ENCODE measurements at regions of chr3 and their contacts with region 1.

Region 1: DNA sequence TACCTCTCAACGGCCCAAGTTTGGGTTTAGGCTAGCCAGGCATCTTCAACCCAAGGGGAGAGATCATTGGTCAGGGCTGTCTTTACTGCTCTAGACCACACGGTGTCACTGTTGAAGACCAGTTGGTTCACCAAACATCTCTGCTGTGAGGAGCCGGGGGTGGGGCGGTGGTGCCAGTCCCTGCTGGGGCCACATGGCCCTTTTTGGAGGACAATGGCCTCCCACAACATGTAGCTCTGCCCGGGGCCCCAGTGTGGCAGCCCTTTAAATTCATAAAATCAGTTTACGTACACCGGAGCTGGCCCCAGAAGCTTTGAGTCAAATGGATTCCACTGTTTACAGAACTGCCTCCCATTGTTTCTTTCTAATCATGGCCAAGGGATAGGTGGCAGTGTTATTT is 19.1 kb upstream of the TM4SF18 start:
- DNase-seq: peak; percentile 70
- H3K4me3 ChIP-seq: no peak overlapping the region
- H3K27ac ChIP-seq: no peak overlapping the region
- H3K4me1 ChIP-seq: peaks cover 12% of the 10 kb centered on the region
- H3K27me3 ChIP-seq: no peaks in the 10 kb centered on the region
- CTCF ChIP-seq: peak; percentile 74
- POLR2A ChIP-seq: no peak

Region 2: DNA sequence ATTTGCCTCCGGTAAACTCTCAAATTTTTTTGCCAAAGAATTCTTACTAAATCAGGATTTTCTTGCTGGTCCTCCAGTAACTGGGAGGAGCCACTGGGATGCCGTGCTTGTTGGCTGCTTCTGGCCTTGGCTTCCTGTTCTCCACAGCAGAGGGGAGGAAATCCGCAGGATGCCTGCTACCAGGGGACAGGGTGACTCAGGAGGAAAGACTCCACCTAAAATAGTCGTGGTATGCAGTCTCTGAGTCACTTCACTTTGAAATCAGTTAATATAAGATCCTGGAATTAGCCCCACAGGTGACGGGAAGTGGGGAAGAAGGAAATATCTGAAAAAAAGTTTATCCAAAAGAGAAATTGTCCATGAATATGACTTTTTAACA is 12.6 kb before region 1 on chr3:
- CTCF ChIA-PET with region 1: interaction called, 18 read pairs
- POLR2A ChIA-PET with region 1: interaction called, 3 read pairs
- dilution Hi-C with region 1: no loop called
- intact Hi-C with region 1: loop called (anchors 1 kb)
- DNase-seq: peak; percentile 99
- H3K4me3 ChIP-seq: peak overlapping the region in 1 of 3 experiments; percentile 45
- H3K27ac ChIP-seq: peak overlapping the region; percentile 99
- H3K4me1 ChIP-seq: peaks cover 54% of the 10 kb centered on the region
- H3K27me3 ChIP-seq: no peaks in the 10 kb centered on the region
- CTCF ChIP-seq: no peak
- POLR2A ChIP-seq: peak; percentile 88

Region 3: DNA sequence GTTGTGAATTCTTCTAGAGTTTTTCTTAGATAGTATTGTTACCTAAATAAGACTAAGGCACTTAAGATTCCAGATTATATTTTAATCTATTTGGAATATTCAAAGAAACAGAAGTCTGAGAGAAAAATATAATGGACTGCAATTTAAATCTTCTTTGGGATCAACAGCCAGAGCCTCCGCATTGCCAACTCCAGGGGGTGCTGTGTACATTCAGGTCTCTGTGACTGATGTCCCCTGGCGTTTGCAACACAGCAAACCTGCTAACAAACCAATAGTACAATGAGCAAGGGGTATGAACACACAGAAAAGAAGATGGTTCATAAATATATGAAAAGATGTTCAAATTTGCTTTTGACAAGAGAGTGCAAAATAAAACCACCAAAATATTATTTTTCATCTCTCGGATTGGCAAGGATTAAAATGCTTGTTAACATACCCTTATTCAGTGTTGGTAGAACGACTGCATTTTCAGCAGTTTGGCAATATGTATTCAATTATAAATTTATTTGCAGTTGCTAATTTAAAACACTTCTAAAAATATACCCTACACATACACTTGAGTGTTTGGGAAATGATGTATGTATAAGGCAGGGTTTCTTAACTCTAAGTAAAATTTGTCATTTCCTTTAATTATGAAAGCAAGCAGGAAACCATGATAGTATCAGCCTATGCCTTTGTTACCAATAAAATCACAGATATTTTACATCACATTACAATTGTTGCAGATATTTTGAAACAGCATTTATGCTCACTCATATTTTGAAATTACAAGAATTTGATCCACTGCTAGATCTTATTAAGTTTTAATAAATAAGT is 41.0 kb after region 1 on chr3:
- CTCF ChIA-PET with region 1: no interaction called
- POLR2A ChIA-PET with region 1: no interaction called
- dilution Hi-C with region 1: no loop called
- intact Hi-C with region 1: loop called (anchors 1 kb)
- DNase-seq: peak; percentile 88
- H3K4me3 ChIP-seq: peak overlapping the region in 1 of 3 experiments; percentile 21
- H3K27ac ChIP-seq: peak overlapping the region; percentile 90
- H3K4me1 ChIP-seq: peaks cover 31% of the 10 kb centered on the region
- H3K27me3 ChIP-seq: no peaks in the 10 kb centered on the region
- CTCF ChIP-seq: peak; percentile 84
- POLR2A ChIP-seq: no peak

Measured in endothelial cell of umbilical vein (primary cell).